Spleen (tissue), 13 donors: ENCODE measurements at regions of chr20 and their contacts with region 1.

Region 1: GRCh38 chr20:35207950-35208611 is 18.4 kb upstream of the MMP24 start:
- DNase-seq: peak; percentile 85
- H3K4me3 ChIP-seq: peak overlapping the region in 3 of 8 donors; percentile 9 to 30 (median 21)
- H3K27ac ChIP-seq: peak overlapping the region; percentile 28 to 83 (median 74)
- H3K4me1 ChIP-seq: peaks cover 0 to 12% (median 3%) of the 10 kb centered on the region in 6 donors
- H3K27me3 ChIP-seq: no peaks in the 10 kb centered on the region
- CTCF ChIP-seq: peak in 10 of 11 experiments; percentile 63 to 93 (median 76)
- POLR2A ChIP-seq: no peak

Region 2: DNA sequence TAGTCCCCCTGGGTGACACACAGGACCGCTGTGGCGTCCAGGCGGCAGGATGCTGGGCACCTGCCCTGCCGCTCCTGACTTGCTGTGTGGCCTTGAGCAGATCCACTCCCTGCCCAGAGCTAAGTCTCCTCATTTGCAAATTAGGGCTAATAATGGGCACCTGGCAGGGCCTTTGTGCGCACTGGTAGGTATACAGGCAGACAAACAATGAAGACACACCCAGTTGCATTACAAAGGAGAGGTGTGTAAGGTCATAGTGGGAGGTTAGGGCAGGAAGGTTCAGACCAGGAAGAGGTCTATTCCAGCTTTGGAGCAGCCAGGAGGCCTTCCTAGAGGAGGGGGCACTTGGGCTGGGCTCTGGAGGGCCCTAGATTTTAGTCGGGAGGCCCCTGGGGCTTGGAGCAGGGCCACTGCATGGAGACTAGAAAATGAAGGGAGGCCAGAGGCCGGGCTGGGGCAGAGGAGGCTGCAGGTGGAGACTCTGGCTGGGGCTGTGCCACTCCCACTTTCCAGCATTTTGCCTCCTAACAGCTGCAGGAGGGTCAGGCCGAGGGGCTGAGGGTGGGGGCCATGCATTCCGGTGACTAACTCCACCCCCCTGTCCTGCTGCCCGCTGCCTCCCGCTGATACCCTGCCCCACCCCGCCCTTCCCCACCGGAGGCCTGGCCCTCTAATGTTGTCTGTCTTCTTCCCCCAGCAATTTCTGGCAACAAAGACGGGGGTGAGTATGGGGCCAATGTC is 223.9 kb before region 1 on chr20:
- intact Hi-C with region 1: no loop called
- DNase-seq: peak; percentile 38
- H3K4me3 ChIP-seq: no peak overlapping the region
- H3K27ac ChIP-seq: no peak overlapping the region
- H3K4me1 ChIP-seq: peaks cover 0 to 6% (median 2%) of the 10 kb centered on the region in 6 donors
- H3K27me3 ChIP-seq: peaks cover 0 to 52% (median 0%) of the 10 kb centered on the region in 7 donors
- CTCF ChIP-seq: no peak
- POLR2A ChIP-seq: no peak

Region 3: GRCh38 chr20:35092524-35093266 is 115.4 kb before region 1 on chr20 and contains the start of gene TRPC4AP:
- intact Hi-C with region 1: loop called (anchors 5 kb)
- DNase-seq: peak; percentile 99
- H3K4me3 ChIP-seq: peak within 1 kb of the TSS; percentile 81 to 97 (median 91)
- H3K27ac ChIP-seq: peak within 1 kb of the TSS; percentile 90 to 98 (median 92)
- H3K4me1 ChIP-seq: peaks cover 28 to 69% (median 56%) of the 10 kb centered on the region in 6 donors
- H3K27me3 ChIP-seq: no peaks in the 10 kb centered on the region
- CTCF ChIP-seq: peak; percentile 98 to 100 (median 100)
- POLR2A ChIP-seq: peak in 2 of 3 donors; percentile 61 to 66
- total RNA-seq, gene TRPC4AP: 59.2 to 81.7 (median 67.1) TPM

Region 4: GRCh38 chr20:35146920-35147574 is 61.0 kb before region 1 on chr20 and contains the start of gene EDEM2:
- intact Hi-C with region 1: loop called (anchors 10 kb)
- DNase-seq: peak; percentile 97
- H3K4me3 ChIP-seq: peak within 1 kb of the TSS; percentile 76 to 98 (median 82)
- H3K27ac ChIP-seq: peak within 1 kb of the TSS; percentile 76 to 95 (median 88)
- H3K4me1 ChIP-seq: peaks cover 23 to 57% (median 38%) of the 10 kb centered on the region in 6 donors
- H3K27me3 ChIP-seq: no peaks in the 10 kb centered on the region
- CTCF ChIP-seq: peak in 2 of 11 experiments; percentile 3 to 33
- POLR2A ChIP-seq: peak; percentile 29 to 78 (median 37)
- total RNA-seq, gene EDEM2: 30.7 to 37.5 (median 34.3) TPM